ENCODE measurements at regions of chr1 and their contacts with region 1.

Region 1: GRCh38 chr1:202810615-202811295 is at the start of gene PCAT6:
- DNase-seq: peak; percentile 98
- H3K4me3 ChIP-seq: peak within 1 kb of the TSS; percentile 71 to 80 (median 78)
- H3K27ac ChIP-seq: peak within 1 kb of the TSS; percentile 82 to 88 (median 84)
- H3K4me1 ChIP-seq: peaks cover 13 to 43% (median 34%) of the 10 kb centered on the region in 4 donors
- H3K27me3 ChIP-seq: no peaks in the 10 kb centered on the region
- CTCF ChIP-seq: peak in 1 of 3 experiments; percentile 21
- EP300 ChIP-seq: no peak
- POLR2A ChIP-seq: peak; percentile 25
- total RNA-seq, gene PCAT6: not detected

Region 2: GRCh38 chr1:202861420-202862200 is 50.9 kb after region 1 on chr1:
- intact Hi-C with region 1: loop called (anchors 5 kb)
- DNase-seq: peak; percentile 96
- H3K4me3 ChIP-seq: peak overlapping the region; percentile 68 to 83 (median 76)
- H3K27ac ChIP-seq: peak overlapping the region; percentile 55 to 72 (median 64)
- H3K4me1 ChIP-seq: peaks cover 8 to 26% (median 17%) of the 10 kb centered on the region in 4 donors
- H3K27me3 ChIP-seq: no peaks in the 10 kb centered on the region
- CTCF ChIP-seq: peak in 1 of 3 experiments; percentile 20
- EP300 ChIP-seq: no peak
- POLR2A ChIP-seq: no peak

Region 3: DNA sequence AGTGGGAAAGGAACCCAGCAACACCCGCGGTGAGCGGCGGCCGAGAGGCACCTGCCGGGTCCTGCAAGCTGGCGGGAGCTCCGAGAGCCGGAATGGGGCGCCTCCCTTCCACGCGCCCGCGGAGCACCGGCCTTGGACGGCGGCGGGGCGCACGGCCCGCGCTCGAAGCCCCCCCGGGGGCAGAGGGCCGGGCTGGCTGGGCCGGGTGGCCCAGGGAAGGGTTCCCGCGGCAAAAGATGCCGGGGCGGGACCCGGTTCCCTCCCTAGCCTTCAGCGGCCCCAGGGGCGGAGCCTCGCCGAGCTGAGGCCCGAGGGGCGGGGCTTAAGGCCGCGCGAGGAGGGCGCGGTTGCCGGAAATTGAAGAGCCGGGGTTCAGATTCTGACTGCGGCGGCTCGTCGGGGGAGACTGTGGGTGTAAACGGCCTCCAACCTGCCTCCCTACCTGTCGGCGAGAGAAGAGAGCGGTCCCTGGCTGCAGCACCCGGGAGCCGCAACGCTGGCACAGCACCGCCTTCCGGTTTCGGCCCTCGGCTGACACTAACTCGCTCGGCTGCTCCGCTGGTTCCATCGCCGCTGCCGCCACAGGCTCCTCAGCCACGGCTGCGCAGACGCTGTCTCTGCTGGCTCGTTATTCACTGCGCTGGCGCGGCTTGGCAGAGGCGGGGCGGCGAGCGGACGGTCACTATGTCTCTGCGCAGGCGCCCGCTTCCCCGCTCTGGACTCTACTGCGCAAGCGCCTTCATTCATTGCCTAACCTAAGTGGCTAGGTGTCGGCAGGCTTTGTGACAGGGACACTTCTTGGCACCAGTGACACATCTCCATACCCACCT is 78.0 kb after region 1 on chr1 and contains the start of gene RABIF:
- intact Hi-C with region 1: loop called (anchors 2 kb)
- DNase-seq: peak; percentile 98
- H3K4me3 ChIP-seq: peak within 1 kb of the TSS; percentile 78 to 88 (median 84)
- H3K27ac ChIP-seq: peak within 1 kb of the TSS; percentile 89 to 94 (median 92)
- H3K4me1 ChIP-seq: peaks cover 8 to 20% (median 14%) of the 10 kb centered on the region in 4 donors
- H3K27me3 ChIP-seq: no peaks in the 10 kb centered on the region
- CTCF ChIP-seq: peak; percentile 18 to 37 (median 24)
- EP300 ChIP-seq: no peak
- POLR2A ChIP-seq: peak; percentile 79
- total RNA-seq, gene RABIF: 4.5 to 8.3 (median 6.9) TPM

Region 4: DNA sequence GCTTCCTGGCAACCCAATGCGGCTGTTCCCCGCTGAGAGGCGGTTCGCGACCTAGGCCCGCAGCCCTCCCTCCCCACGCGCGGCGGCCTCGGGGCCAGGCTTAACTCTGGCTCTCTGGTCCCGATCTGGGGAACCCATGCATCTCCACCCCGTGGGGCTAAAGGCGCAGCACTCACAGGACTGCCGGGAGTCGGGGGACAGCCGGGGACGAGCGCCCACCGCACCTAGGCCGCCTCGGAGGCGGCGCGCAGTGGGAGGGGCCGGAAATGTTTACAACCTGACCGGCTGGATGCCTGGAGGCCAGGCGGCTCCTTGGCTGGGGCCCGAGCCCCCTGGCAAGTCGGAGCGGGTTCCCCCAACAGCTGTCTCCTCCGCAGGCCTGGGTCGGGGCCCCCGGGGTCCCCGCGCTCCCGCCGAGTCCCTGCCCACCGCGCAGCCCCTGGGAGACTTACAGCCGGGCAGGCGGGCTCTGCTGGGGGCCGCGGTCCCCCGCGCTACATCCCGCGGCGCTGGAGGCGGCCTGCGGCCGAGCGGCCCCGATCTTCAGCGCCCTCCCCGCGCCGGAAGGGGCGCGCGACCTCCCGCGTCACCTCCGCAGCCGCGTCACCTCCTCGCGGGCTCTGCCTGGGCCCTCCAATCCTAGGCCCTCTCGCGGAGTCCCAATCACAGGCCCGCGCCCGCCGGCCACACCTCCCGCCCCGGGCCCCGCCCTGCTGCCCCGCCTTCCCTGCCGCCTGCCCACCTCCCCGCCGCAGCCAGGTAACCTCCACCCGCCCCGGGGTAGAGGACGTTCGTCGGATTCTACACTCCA is 147.2 kb after region 1 on chr1 and contains the start of gene ADIPOR1:
- intact Hi-C with region 1: no loop called
- DNase-seq: peak; percentile 96
- H3K4me3 ChIP-seq: peak within 1 kb of the TSS; percentile 87 to 100 (median 95)
- H3K27ac ChIP-seq: peak within 1 kb of the TSS; percentile 90 to 97 (median 95)
- H3K4me1 ChIP-seq: peaks cover 47 to 54% (median 50%) of the 10 kb centered on the region in 4 donors
- H3K27me3 ChIP-seq: peaks cover 0 to 4% (median 0%) of the 10 kb centered on the region in 4 donors
- CTCF ChIP-seq: peak in 1 of 3 experiments; percentile 18
- EP300 ChIP-seq: no peak
- POLR2A ChIP-seq: peak; percentile 94
- total RNA-seq, gene ADIPOR1: 53.6 to 93.4 (median 70.0) TPM

Region 5: GRCh38 chr1:203148125-203148524 is 337.4 kb after region 1 on chr1:
- intact Hi-C with region 1: no loop called
- DNase-seq: no peak
- H3K4me3 ChIP-seq: no peak overlapping the region
- H3K27ac ChIP-seq: no peak overlapping the region
- H3K4me1 ChIP-seq: peaks cover 0 to 3% (median 0%) of the 10 kb centered on the region in 4 donors
- H3K27me3 ChIP-seq: peaks cover 0 to 7% (median 0%) of the 10 kb centered on the region in 4 donors
- CTCF ChIP-seq: peak in 1 of 3 experiments; percentile 20
- EP300 ChIP-seq: no peak
- POLR2A ChIP-seq: no peak